ENCODE measurements at regions of chr10 and their contacts with region 1.

Region 1: GRCh38 chr10:120336911-120337540 is 120.0 kb upstream of the PLPP4 start:
- DNase-seq: peak; percentile 15
- H3K4me3 Mint-ChIP-seq: no peak overlapping the region
- H3K27ac Mint-ChIP-seq: no peak overlapping the region
- H3K4me1 Mint-ChIP-seq: no peaks in the 10 kb centered on the region
- H3K27me3 Mint-ChIP-seq: peaks cover 2% of the 10 kb centered on the region

Region 2: GRCh38 chr10:120221873-120222485 is 115.0 kb before region 1 on chr10:
- intact Hi-C with region 1: loop called (anchors 2 kb)
- DNase-seq: no peak
- H3K4me3 Mint-ChIP-seq: no peak overlapping the region
- H3K27ac Mint-ChIP-seq: no peak overlapping the region
- H3K4me1 Mint-ChIP-seq: no peaks in the 10 kb centered on the region
- H3K27me3 Mint-ChIP-seq: no peaks in the 10 kb centered on the region

Region 3: GRCh38 chr10:120318862-120319261 is 18.2 kb before region 1 on chr10:
- intact Hi-C with region 1: no loop called
- DNase-seq: no peak
- H3K4me3 Mint-ChIP-seq: no peak overlapping the region
- H3K27ac Mint-ChIP-seq: no peak overlapping the region
- H3K4me1 Mint-ChIP-seq: no peaks in the 10 kb centered on the region
- H3K27me3 Mint-ChIP-seq: peaks cover 13% of the 10 kb centered on the region

Region 4: GRCh38 chr10:120381931-120382330 is 44.9 kb after region 1 on chr10:
- intact Hi-C with region 1: no loop called
- DNase-seq: no peak
- H3K4me3 Mint-ChIP-seq: no peak overlapping the region
- H3K27ac Mint-ChIP-seq: no peak overlapping the region
- H3K4me1 Mint-ChIP-seq: no peaks in the 10 kb centered on the region
- H3K27me3 Mint-ChIP-seq: no peaks in the 10 kb centered on the region